Upper lobe of right lung (tissue), 1 donor: ENCODE measurements at regions of chr18 and their contacts with region 1.

Region 1: GRCh38 chr18:74551936-74552555 is 17.7 kb downstream of the CNDP1 start:
- DNase-seq: peak; percentile 80
- ATAC-seq: peak; percentile 98
- H3K4me3 ChIP-seq: no peak overlapping the region
- H3K27ac ChIP-seq: no peak overlapping the region
- H3K4me1 ChIP-seq: no peaks in the 10 kb centered on the region
- H3K27me3 ChIP-seq: no peaks in the 10 kb centered on the region
- CTCF ChIP-seq: peak; percentile 88

Region 2: DNA sequence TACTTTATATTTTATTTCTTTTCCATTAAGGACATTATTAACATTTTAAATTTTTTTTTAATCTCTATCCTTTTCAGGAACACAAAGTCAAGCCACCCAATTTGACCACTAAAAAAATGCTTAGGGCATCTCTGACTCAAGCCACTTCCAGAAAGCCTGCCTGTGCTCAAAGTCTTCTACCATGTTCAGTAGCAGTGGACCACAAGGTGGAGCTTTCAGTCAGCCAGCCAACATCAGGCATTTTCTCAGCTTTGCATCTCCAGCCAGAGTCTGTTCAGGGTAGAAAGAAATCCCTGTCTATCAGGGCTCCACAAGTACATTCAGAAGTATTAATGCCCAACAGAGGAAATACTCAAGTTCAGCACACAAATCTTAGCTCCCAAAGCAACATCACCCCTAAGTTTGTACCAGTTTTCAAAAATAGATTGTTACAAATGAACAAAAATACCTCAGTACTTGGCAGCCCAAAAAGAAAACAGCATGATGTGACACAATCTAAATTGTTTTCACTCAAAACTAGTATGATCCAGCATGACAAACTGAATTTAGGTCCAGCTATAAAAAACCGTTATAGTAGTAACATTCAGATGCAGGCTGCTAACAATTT is 198.8 kb before region 1 on chr18:
- intact Hi-C with region 1: loop called (anchors 10 kb)
- DNase-seq: no peak
- ATAC-seq: peak; percentile 91
- H3K4me3 ChIP-seq: no peak overlapping the region
- H3K27ac ChIP-seq: no peak overlapping the region
- H3K4me1 ChIP-seq: no peaks in the 10 kb centered on the region
- H3K27me3 ChIP-seq: no peaks in the 10 kb centered on the region
- CTCF ChIP-seq: peak; percentile 72